Right lobe of liver (tissue), 6 donors: ENCODE measurements at regions of chr4 and their contacts with region 1.

Region 1: GRCh38 chr4:139454111-139455045 is at the start of gene RAB33B:
- DNase-seq: no peak
- ATAC-seq: no peak
- H3K4me3 ChIP-seq: peak within 1 kb of the TSS; percentile 50 to 76 (median 76)
- H3K27ac ChIP-seq: peak within 1 kb of the TSS; percentile 90 to 96 (median 94)
- H3K4me1 ChIP-seq: peaks cover 0 to 31% (median under 1%) of the 10 kb centered on the region in 4 donors
- H3K27me3 ChIP-seq: no peaks in the 10 kb centered on the region
- CTCF ChIP-seq: no peak
- POLR2A ChIP-seq: peak; percentile 90
- total RNA-seq, gene RAB33B: 10.9 to 15.1 (median 12.1) TPM

Region 2: DNA sequence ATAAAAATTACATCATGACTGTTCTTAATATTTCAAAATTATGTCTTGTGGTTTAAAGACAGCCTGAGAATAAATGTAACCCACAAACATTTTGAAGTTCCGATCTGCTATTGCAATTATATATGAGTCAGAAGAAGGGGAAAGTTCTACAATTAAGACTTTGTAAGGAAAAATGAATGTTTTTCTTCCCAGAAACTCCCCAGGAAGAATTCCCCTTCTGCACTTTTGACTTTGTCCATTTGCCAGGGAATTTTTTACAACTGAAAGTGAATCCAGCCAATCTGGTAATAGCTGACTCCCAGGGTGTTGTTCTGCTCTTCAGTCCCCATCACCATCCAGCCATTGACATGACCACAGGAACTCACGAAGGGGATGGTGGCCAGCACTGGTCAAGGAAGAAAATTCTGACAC is 500.4 kb before region 1 on chr4:
- intact Hi-C with region 1: no loop called
- DNase-seq: no peak
- ATAC-seq: peak; percentile 23 to 78 (median 44)
- H3K4me3 ChIP-seq: no peak overlapping the region
- H3K27ac ChIP-seq: peak overlapping the region in 1 of 3 donors; percentile 43
- H3K4me1 ChIP-seq: peaks cover 0 to 4% (median 0%) of the 10 kb centered on the region in 4 donors
- H3K27me3 ChIP-seq: no peaks in the 10 kb centered on the region
- CTCF ChIP-seq: no peak
- POLR2A ChIP-seq: no peak

Region 3: DNA sequence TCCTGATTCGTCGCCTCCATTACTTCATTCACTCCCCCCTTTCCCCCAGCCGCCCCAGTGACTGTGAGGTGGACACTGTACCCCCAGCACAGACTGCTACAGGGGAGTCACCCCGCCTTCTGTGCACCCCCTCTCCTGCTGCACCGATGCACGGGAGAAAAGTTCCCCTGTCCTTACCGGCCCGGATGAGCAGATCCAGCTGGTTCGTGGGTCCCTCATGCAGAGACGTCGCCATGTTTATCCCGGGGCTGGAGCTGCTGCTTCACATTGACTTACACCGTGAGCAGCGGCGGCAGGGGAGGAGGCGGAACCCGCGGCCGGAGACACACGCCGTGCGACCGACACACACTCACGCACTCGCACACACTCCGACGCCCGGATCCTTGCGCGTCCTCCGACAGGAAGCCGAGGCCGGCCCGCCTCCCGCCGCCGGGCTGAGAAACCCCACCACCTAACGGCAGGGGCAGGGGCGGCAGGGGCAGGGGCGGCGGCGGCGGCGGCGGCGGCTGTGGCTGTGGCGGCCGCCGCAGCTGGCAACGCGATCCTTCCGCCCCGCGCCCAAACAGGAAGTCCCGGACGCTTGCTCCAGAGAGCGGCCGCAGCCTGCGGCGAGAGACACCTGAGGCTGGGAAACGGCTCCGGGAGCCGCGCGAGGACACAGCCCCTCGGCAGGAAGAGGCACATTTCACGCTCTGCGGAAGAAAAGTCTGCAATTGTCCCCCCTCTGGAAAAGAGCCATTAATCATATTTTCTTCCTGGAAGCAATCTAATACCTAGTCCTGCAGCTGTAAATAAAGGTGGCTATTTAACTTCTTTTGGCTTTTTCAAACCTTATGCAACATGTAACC is 370.2 kb before region 1 on chr4:
- intact Hi-C with region 1: no loop called
- DNase-seq: peak; percentile 89 to 94 (median 93)
- ATAC-seq: peak; percentile 62 to 81 (median 77)
- H3K4me3 ChIP-seq: peak overlapping the region; percentile 66 to 71 (median 69)
- H3K27ac ChIP-seq: peak overlapping the region; percentile 91 to 96 (median 92)
- H3K4me1 ChIP-seq: peaks cover 0 to 19% (median 8%) of the 10 kb centered on the region in 4 donors
- H3K27me3 ChIP-seq: no peaks in the 10 kb centered on the region
- CTCF ChIP-seq: peak; percentile 28 to 39 (median 35)
- POLR2A ChIP-seq: peak; percentile 72

Region 4: DNA sequence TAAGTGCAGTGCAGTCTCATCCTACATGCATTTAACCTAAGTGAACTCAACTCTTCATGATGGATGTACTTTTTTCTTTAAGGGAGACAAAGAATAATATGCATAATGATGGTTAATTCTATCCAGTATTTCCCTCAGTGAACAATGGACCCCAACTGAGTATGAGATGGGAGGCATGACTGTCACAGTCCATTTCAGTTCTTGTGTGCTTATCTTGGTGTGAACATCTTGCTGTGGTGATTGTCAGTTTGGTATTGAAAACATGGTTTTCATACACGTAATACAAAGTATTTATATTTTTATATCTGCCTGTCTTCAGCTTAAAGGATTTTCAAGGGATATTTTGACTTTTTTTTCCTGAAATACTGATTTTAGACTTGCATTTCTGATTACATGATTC is 80.1 kb before region 1 on chr4:
- intact Hi-C with region 1: no loop called
- DNase-seq: no peak
- ATAC-seq: no peak
- H3K4me3 ChIP-seq: no peak overlapping the region
- H3K27ac ChIP-seq: no peak overlapping the region
- H3K4me1 ChIP-seq: no peaks in the 10 kb centered on the region
- H3K27me3 ChIP-seq: no peaks in the 10 kb centered on the region
- CTCF ChIP-seq: no peak
- POLR2A ChIP-seq: no peak

Region 5: DNA sequence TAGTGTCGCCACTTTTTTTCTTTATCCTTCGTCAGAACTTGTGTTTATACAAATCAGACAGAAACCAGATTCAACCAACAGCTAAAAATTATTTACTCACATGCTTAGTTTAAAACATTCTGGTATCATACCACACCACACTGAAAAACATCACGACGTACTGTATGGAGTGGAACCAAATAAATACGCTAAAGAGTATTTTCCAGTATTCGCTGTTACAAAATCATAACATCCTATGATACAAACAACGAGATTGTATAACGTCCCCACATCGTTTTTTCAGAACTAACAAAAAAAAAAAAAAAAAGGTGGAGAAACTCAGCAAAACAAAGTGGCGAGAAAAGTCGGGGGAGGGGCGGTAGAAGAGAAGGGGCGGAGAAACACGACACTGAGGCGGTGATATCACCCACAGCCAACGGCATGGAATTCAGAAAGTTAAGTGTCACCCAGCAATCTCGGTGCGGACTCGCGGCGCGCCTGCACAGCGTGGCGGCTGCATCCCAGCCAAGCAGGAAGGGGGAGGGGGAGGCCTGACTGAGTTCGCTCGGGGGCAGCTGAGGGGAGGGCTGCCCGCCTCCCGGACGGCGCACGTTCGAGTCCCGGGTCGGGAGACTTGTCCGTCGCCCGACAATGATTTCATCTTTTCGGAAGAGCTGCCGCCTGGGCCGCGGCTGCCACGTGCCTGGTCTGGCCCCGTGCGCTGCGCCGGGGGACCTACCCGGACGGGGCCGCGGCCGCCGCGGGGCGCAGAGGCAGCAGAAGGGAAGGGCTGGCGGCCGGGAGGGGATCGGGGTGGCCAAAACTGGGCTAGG is 100.7 kb after region 1 on chr4:
- intact Hi-C with region 1: loop called in 1 of 2 experiments (anchors 5 kb)
- DNase-seq: peak; percentile 93 to 94 (median 94)
- ATAC-seq: peak; percentile 69 to 77 (median 71)
- H3K4me3 ChIP-seq: peak overlapping the region; percentile 85 to 93 (median 85)
- H3K27ac ChIP-seq: peak overlapping the region; percentile 99 to 100 (median 100)
- H3K4me1 ChIP-seq: peaks cover 0 to 60% (median 23%) of the 10 kb centered on the region in 4 donors
- H3K27me3 ChIP-seq: no peaks in the 10 kb centered on the region
- CTCF ChIP-seq: no peak
- POLR2A ChIP-seq: peak; percentile 85